ENCODE measurements at regions of chr6 and their contacts with region 1.

Region 1: DNA sequence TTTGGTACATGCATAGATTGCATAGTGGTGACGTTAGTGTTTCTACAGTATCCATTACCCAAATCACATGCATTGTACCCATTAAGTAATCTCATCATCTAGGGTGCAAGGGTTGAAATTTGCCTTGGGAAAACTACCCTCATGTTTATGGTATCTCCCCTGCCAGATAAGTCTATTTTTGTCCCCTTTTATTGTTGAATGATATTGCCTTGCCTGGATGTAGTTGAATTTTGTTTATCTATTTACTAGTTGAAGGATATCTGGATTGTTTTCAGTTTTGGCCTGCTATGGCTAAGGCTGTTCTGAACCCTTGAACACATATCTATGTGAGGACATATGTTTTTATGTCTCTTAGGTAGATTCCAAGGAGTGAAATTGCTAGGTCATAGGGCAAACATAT is 13.4 kb downstream of the HLA-DRB1 start:
- DNase-seq: no peak
- ATAC-seq: no peak
- H3K4me3 ChIP-seq: no peak overlapping the region
- H3K27ac ChIP-seq: no peak overlapping the region
- H3K4me1 ChIP-seq: no peaks in the 10 kb centered on the region
- H3K27me3 ChIP-seq: peaks cover 0 to 5% (median 0%) of the 10 kb centered on the region in 7 donors
- CTCF ChIP-seq: no peak

Region 2: DNA sequence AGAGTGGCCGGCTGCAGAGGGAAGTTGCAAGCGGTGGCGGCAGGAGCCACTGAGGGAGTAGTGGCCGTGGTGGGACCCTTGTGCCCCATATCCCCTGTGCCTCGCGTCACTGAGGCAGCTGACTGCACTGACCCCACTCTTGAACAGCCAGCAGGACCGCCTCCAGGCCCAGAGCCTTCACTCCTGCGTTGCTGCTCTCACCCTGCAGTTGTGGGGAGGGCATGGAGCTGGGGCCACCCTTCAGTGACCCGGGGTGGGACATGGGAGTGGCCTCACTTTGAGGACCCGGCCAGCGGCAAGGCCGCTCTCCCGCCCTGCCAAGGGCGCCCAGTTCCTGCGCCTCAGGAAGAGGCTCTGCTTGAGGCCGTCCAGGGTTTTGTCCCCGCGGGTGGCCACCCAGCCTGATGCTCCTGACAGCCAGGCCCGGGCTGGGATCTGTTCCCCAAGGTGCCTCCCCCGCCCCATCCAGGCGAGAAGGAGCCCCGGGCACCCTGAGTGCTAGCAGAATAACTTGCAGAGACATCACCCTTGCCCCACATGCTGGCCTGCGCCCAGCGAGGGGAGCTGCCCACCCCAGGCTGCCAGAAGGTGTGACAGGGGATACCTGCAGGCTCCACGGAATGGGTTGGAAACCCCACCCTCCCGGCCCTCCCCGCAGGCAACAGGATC is 92.1 kb before region 1 on chr6:
- intact Hi-C with region 1: loop called in 1 of 10 experiments (anchors 10 kb)
- DNase-seq: no peak
- ATAC-seq: peak in 2 of 8 donors; percentile 24 to 38
- H3K4me3 ChIP-seq: no peak overlapping the region
- H3K27ac ChIP-seq: no peak overlapping the region
- H3K4me1 ChIP-seq: no peaks in the 10 kb centered on the region
- H3K27me3 ChIP-seq: peaks cover 0 to 3% (median 0%) of the 10 kb centered on the region in 7 donors
- CTCF ChIP-seq: no peak

Region 3: GRCh38 chr6:32659856-32660595 is 83.8 kb after region 1 on chr6:
- intact Hi-C with region 1: no loop called
- DNase-seq: no peak
- ATAC-seq: peak in 2 of 8 donors; percentile 17 to 76
- H3K4me3 ChIP-seq: no peak overlapping the region
- H3K27ac ChIP-seq: no peak overlapping the region
- H3K4me1 ChIP-seq: peaks cover 0 to 6% (median 0%) of the 10 kb centered on the region in 9 donors
- H3K27me3 ChIP-seq: peaks cover 0 to 3% (median 0%) of the 10 kb centered on the region in 7 donors
- CTCF ChIP-seq: no peak

Measured in heart right ventricle (tissue), 16 donors.